Activated B cell treated with CpG ODN at 0.5 μM for 24 hours (primary cell): ENCODE measurements at regions of chr3 and their contacts with region 1.

Region 1: DNA sequence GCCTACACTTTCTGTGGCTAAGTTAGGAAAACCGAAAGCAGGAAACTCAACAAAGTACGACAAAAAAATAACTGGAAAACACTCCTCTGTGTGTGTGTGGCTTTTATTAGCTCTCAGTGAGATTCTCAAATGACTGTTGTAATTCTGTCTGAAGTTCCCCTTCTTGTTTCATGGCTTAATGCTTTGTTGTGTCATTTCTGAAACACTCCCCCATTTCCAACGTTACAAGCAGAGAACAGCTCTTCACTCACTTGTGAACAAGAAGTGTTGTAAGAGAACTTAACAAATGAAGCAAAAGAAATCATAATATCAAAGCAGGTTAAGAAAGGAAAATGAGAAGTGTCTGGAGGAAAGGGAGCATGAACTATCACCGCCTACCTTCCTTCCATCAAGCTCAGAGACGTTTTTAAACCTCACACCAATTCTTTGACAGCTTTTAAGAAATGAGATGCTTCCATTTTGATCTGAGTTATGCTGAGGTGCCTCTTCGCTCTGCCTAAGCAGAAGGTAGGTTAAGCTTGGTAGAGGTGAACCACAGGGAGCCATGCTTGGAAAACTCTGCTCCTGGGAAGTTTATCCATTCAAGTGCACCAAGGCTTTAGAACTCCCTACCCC is 12.4 kb upstream of the SEC62 start:
- DNase-seq: no peak
- ATAC-seq: peak; percentile 87
- H3K4me3 Mint-ChIP-seq: peak overlapping the region; percentile 69
- H3K27ac Mint-ChIP-seq: peak overlapping the region; percentile 92
- H3K4me1 Mint-ChIP-seq: peaks cover 61% of the 10 kb centered on the region
- H3K27me3 Mint-ChIP-seq: no peaks in the 10 kb centered on the region
- CTCF ChIP-seq: no peak

Region 2: DNA sequence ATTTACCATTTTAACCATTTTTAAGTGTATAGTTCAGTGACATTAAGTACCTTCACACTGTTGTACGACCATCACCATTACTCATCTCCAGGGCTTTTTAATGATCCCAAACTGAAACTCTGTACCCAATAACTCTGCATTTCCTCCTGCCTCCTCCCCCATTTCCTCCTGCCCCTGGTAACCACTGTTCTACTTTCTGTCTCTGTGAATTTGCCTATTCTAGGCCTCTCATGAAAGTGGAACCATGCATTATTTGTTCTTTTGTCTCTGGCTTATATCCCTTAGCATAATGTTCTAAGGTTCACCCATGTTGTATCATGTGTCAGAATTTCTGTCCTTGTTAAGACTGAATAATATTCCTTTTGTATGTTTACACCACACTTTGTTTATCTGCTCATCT is 444.9 kb before region 1 on chr3:
- CTCF ChIA-PET with region 1: no interaction called
- POLR2A ChIA-PET with region 1: no interaction called
- intact Hi-C with region 1: no loop called
- DNase-seq: no peak
- ATAC-seq: peak; percentile 14
- H3K4me3 Mint-ChIP-seq: no peak overlapping the region
- H3K27ac Mint-ChIP-seq: no peak overlapping the region
- H3K4me1 Mint-ChIP-seq: peaks cover 12% of the 10 kb centered on the region
- H3K27me3 Mint-ChIP-seq: no peaks in the 10 kb centered on the region
- CTCF ChIP-seq: no peak

Region 3: GRCh38 chr3:169939320-169939719 is 14.9 kb before region 1 on chr3:
- CTCF ChIA-PET with region 1: interaction called, 5 read pairs
- POLR2A ChIA-PET with region 1: interaction called, 189 read pairs
- intact Hi-C with region 1: loop called (anchors 2 kb)
- DNase-seq: no peak
- ATAC-seq: no peak
- H3K4me3 Mint-ChIP-seq: peak overlapping the region; percentile 41
- H3K27ac Mint-ChIP-seq: peak overlapping the region; percentile 94
- H3K4me1 Mint-ChIP-seq: peaks cover 72% of the 10 kb centered on the region
- H3K27me3 Mint-ChIP-seq: no peaks in the 10 kb centered on the region
- CTCF ChIP-seq: no peak